ENCODE measurements at regions of chr17 and their contacts with region 1.

Region 1: GRCh38 chr17:35119368-35120165 is at the start of gene RAD51D:
- DNase-seq: peak; percentile 94
- CTCF ChIP-seq: peak; percentile 97

Region 2: DNA sequence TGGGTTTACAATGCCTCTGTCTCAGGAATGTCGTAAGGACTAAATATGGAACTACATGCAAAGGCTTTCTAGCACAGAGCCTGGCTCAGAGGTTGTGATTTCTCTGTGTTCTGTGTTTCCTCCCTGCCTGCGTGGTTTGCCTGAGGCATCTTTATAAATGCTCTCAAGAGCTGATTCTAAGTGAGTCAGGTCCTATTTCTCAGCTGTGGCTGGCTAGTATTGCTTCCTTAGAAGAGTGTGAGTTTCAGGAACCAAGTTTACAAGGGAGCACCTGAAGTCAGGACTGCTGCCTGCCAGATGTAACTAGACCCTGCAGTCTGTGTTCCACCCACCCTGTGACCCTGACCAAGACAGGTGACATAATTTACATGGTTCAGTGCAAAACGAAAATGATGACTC is 748.6 kb before region 1 on chr17:
- in situ Hi-C with region 1: no loop called
- DNase-seq: no peak
- CTCF ChIP-seq: no peak

Region 3: DNA sequence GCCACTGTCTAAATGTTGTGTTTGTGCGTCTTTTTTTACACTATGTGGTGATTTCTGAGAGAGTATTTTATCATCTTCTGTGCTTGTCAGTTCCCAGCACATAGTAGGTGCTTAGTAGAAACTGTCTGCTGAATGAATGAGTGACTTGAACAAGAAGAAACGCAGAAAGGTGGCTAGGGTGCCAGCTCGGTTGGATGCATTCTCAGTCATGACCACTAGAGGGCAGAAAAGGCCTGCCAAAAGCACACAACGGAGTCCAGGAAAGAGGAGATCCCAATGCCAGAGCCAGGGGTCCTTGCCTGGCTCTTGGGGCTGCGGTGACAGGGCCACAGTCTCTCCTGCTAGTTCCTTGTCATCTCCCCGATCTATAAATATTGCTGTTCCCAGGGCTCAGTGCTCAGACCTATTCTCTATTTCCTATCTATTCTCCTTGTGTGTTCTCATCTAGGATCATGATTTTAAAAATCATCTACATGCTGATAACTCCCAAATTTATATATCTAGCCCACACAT is 699.3 kb before region 1 on chr17:
- in situ Hi-C with region 1: loop called (anchors 10 kb)
- DNase-seq: peak; percentile 75
- CTCF ChIP-seq: peak; percentile 87

Region 4: DNA sequence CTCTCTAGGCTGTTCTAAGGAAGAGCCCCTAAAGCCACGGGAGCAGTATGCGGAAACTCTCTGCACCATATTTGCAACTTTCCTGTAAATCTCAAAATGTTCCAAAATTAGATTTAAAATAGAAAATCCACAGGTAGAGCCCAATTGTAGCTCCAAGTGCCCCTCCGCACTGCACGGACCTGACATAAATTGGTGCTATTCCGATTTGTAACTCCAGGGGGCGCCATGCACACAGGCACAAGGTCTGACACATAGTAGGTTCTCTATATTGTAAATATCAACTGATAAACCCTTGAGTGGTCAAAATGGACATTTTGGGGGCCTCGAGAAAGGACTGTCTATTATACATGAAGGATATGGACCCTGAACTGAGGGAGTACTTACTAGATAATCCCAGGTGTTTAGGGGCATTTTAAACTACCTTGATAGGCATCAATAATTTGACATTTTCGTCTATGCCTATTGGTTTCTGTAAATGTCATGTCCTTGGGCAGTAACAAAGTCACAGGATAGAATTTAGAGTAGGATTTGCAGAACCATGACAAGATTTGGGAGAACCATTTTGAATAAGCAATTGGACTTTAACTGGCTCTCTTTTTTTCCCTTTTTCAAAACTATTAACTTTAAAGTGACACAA is 576.7 kb before region 1 on chr17:
- in situ Hi-C with region 1: loop called (anchors 25 kb)
- DNase-seq: peak; percentile 43
- CTCF ChIP-seq: peak; percentile 66

Region 5: GRCh38 chr17:34998205-34998604 is 121.4 kb before region 1 on chr17:
- in situ Hi-C with region 1: loop called (anchors 5 kb)
- DNase-seq: peak; percentile 89
- CTCF ChIP-seq: peak; percentile 94

Region 6: DNA sequence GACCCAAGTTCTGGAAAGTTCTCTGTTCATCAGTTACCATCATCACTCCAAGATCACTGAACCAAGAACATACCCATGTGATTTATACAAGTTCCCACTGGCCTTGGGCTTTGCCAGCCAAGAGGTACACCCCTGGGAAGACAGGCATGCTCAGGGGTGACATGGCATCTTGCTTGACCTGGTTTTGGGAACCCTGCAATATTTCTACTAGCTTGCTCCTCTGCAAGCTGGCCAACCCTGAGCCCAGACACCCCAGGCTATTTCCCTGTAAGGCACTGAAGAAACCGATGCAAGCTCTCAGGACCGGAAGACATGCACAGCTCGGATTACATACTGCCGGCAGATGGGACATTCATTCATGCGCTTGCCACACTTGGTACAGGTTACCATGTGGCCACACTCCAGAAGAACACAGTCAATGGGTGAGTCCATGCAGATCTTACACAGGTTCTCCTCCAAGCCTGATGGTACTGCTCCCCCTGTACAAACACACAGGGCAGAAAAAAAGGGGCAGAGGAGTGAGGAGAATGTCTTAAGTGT is 107.8 kb before region 1 on chr17:
- in situ Hi-C with region 1: no loop called
- DNase-seq: no peak
- CTCF ChIP-seq: no peak